IMR-90 (cell line): ENCODE measurements at regions of chr3 and their contacts with region 1.

Region 1: GRCh38 chr3:165233501-165234195 is 37.5 kb upstream of the SLITRK3 start:
- DNase-seq: no peak
- ATAC-seq: no peak
- H3K4me3 ChIP-seq: no peak overlapping the region
- H3K27ac ChIP-seq: no peak overlapping the region
- H3K4me1 ChIP-seq: no peaks in the 10 kb centered on the region
- H3K27me3 ChIP-seq: no peaks in the 10 kb centered on the region
- CTCF ChIP-seq: no peak
- POLR2A ChIP-seq: no peak
- RAD21 ChIP-seq: no peak

Region 2: GRCh38 chr3:165206454-165207266 is 27.0 kb before region 1 on chr3:
- CTCF ChIA-PET with region 1: interaction called, 11 read pairs
- POLR2A ChIA-PET with region 1: no interaction called
- dilution Hi-C with region 1: no loop called
- in situ Hi-C with region 1: no loop called
- intact Hi-C with region 1: no loop called
- DNase-seq: peak; percentile 65
- ATAC-seq: peak; percentile 92
- H3K4me3 ChIP-seq: peak overlapping the region; percentile 29
- H3K27ac ChIP-seq: no peak overlapping the region
- H3K4me1 ChIP-seq: no peaks in the 10 kb centered on the region
- H3K27me3 ChIP-seq: no peaks in the 10 kb centered on the region
- CTCF ChIP-seq: peak; percentile 95
- POLR2A ChIP-seq: no peak
- RAD21 ChIP-seq: peak; percentile 58